Lower lobe of right lung (tissue), 2 donors: ENCODE measurements at regions of chr11 and their contacts with region 1.

Region 1: DNA sequence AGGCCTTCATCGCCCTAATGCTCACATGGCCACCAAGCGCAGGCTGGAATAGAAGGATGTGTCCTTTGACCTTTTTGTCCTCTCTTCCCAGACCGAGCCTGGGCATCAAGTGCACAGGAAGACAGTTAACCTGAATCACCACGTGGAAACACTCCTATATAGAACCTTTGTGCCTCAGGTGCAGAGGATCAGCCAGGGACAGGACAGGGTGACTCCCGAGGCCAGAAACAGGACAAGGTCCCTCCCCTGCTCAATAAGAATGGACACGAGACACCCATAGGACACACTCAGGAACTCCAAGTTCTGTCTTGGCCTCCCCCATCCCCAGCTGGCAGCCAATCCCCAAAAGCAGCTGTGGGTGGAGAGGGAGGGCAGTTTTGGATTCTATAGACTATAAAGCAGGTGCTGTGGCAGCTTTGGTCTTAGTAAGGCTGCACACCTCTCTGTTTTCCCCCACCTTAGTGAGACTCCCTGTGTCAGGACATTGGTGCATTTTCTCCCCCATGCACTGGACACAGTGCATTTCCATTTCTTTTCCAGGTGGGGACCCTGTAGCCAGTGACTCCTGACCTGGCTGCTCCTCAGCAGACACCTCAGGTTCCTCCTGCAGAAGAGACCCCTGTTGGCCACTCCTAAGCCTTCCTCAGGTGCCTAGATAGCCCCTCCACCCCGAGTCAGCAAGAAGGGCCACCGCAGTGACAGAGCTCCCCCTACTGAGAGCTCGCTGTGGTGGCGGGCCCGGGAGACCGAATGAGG is 43.6 kb upstream of the POU2AF1 start:
- DNase-seq: peak; percentile 61
- ATAC-seq: peak; percentile 86 to 91
- H3K4me3 ChIP-seq: no peak overlapping the region
- H3K27ac ChIP-seq: no peak overlapping the region
- H3K4me1 ChIP-seq: peaks cover 19% of the 10 kb centered on the region
- H3K27me3 ChIP-seq: no peaks in the 10 kb centered on the region
- CTCF ChIP-seq: peak; percentile 71

Region 2: GRCh38 chr11:111283945-111284481 is 138.7 kb before region 1 on chr11:
- intact Hi-C with region 1: loop called (anchors 10 kb)
- DNase-seq: no peak
- ATAC-seq: peak; percentile 37 to 46
- H3K4me3 ChIP-seq: no peak overlapping the region
- H3K27ac ChIP-seq: no peak overlapping the region
- H3K4me1 ChIP-seq: peaks cover 6% of the 10 kb centered on the region
- H3K27me3 ChIP-seq: no peaks in the 10 kb centered on the region
- CTCF ChIP-seq: no peak